ENCODE measurements at regions of chr2 and their contacts with region 1.

Region 1: GRCh38 chr2:235595422-235596010 is 101.7 kb downstream of the AGAP1 start:
- DNase-seq: peak; percentile 64 to 86 (median 81)
- H3K4me3 ChIP-seq: no peak overlapping the region
- H3K27ac ChIP-seq: no peak overlapping the region
- H3K4me1 ChIP-seq: no peaks in the 10 kb centered on the region
- H3K27me3 ChIP-seq: peaks cover 0 to 19% (median 6%) of the 10 kb centered on the region in 5 experiments

Region 2: GRCh38 chr2:235135990-235136561 is 459.4 kb before region 1 on chr2:
- CTCF ChIA-PET with region 1: interaction called, 53 read pairs
- POLR2A ChIA-PET with region 1: no interaction called
- DNase-seq: peak; percentile 55 to 69 (median 63)
- H3K4me3 ChIP-seq: no peak overlapping the region
- H3K27ac ChIP-seq: no peak overlapping the region
- H3K4me1 ChIP-seq: no peaks in the 10 kb centered on the region
- H3K27me3 ChIP-seq: peaks cover 0 to 61% (median 10%) of the 10 kb centered on the region in 5 experiments

Region 3: GRCh38 chr2:235577404-235578330 is 17.8 kb before region 1 on chr2:
- CTCF ChIA-PET with region 1: interaction called, 13 read pairs
- POLR2A ChIA-PET with region 1: no interaction called
- DNase-seq: no peak
- H3K4me3 ChIP-seq: no peak overlapping the region
- H3K27ac ChIP-seq: no peak overlapping the region
- H3K4me1 ChIP-seq: no peaks in the 10 kb centered on the region
- H3K27me3 ChIP-seq: peaks cover 0 to 70% (median 9%) of the 10 kb centered on the region in 5 experiments

Region 4: DNA sequence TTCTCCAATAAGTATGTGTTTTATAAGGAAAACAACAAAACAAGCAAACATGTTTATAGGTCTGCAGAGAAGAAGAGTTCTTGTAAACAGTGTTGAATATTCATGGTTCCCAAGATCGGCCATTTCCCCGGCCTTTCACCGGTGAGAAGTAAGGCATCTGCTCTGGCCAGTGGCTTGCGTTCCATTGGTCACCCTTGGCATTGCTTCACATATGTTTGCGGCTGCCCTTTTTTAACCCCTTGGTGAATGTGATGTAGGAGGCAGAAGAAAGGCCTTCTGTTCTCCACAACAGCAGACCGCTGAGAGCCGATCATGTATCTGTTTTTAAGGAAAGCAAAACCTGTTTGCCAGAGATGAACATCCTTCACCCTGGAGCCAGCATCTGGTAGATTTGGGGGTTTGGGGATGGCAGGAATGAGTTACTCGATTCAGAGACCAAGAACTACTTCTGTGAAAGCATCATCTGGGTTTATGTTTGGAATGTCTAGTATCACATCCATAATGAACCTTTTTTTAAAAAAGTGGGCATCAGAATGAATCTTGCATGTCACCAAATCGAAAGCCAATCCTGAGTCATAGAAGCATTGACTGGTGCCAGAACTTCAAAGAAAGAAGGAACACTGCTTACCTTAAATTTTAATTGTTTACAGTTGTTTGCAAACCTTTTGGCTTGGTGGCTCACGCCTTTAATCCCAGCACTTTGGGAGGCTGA is 10.6 kb after region 1 on chr2:
- CTCF ChIA-PET with region 1: no interaction called
- POLR2A ChIA-PET with region 1: no interaction called
- DNase-seq: no peak
- H3K4me3 ChIP-seq: no peak overlapping the region
- H3K27ac ChIP-seq: no peak overlapping the region
- H3K4me1 ChIP-seq: no peaks in the 10 kb centered on the region
- H3K27me3 ChIP-seq: peaks cover 0 to 31% (median 7%) of the 10 kb centered on the region in 5 experiments

Region 5: DNA sequence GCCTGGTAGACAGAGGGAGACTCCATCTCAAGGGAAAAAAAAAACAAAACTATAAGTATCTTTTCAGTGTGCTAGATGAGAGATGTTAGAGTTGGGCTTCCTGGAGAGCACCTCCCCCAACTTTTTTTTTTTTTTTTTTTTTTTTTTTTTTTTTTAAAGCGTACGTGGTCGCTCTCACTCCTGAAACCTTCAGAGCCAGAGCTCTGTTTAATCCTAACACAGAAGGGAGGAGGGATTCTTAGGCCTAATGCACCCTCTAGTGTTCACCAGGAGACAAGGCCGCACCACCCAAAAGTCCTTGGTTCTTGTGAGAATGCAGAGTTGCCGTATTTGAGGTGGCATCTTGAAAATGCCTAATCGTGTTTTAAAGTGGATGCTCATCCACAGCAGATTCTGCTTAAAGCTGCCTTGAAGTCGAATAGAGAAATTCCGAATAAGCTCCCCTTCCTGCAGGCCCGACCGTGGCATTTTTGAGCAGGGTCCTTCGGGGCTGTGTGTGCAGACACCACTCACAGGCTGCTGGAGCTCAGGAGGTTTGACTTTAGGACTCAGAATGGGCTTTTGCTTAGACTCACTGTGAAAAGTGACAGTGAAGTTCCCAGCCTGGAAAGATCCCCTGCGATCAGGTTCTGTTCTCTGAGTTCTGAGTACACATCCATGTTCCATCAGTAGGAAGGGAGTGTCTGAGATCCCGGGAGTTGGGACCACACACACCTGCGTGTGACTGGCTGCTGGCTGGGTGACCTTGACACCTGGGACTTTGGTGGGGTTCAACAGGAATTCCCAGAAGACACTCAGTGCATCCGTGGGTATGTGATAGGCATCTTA is 151.0 kb after region 1 on chr2:
- CTCF ChIA-PET with region 1: interaction called, 98 read pairs
- POLR2A ChIA-PET with region 1: no interaction called
- DNase-seq: peak; percentile 81 to 92 (median 85)
- H3K4me3 ChIP-seq: no peak overlapping the region
- H3K27ac ChIP-seq: no peak overlapping the region
- H3K4me1 ChIP-seq: no peaks in the 10 kb centered on the region
- H3K27me3 ChIP-seq: peaks cover 0 to 20% (median 0%) of the 10 kb centered on the region in 5 experiments